Activated CD4-positive, alpha-beta memory T cell treated with anti-CD3 and anti-CD28 coated beads for 36 hours (primary cell): ENCODE measurements at regions of chr13 and their contacts with region 1.

Region 1: DNA sequence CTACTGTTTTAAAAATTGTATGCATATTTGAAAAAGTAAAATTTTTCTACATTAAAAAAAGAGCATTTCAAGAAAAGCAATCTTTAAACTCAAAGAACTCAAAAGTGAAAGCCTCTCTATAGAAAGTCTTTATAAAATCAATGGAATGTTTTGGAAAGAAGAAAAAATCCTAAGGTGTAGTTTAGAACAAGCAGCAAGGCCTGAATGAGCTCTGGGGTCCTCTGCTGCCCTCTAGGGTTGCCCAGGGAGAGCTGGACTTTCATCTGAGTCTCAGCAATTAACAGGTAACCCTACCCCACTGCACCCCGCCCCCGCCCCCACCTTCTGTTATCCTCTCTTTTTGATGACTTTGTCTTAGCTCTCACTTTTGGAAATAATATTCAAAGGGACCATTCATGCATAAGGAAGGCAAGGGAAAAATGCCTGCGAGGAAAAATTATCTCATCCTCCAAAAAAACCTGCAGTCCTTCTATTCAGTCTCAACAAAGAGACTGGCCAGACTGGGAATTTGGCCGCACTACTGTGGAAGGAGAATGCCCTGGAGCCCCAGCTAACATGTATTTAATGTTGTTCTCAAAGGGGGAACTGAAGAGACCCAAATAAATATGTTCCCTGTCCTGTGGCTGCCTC is 24.1 kb downstream of the SLC25A30 start:
- DNase-seq: peak; percentile 47
- H3K4me3 Mint-ChIP-seq: no peak overlapping the region
- H3K27ac Mint-ChIP-seq: no peak overlapping the region
- H3K4me1 Mint-ChIP-seq: peaks cover 46% of the 10 kb centered on the region
- H3K27me3 Mint-ChIP-seq: no peaks in the 10 kb centered on the region

Region 2: DNA sequence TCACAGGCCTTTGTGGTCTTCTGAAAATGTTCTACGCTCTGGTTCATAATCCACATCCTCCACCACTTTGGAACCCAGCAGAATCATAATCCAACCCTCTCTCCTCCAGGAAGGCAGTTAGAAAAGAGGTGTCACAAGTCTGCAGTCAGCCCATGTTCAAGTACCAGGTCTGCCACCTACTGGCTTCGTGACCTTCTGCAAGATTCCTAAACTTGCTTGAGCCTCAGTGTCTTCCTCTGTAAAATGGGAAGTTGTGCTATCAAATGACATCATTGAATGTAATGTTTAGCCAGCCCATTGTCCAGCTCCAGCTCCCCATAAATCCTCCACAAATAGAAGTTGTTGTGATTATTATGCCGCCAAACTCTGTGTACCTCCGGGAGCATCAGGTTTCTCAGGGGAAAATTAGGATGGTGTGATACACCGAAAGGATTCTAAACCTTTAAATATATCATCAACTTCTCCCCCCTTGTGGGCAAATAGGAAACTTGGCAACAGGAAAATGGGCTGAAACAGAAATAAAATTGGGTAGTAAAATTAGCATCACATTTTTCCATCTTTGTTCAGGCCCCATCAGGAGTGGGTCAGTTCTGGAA is 514.5 kb before region 1 on chr13:
- CTCF ChIA-PET with region 1: no interaction called
- POLR2A ChIA-PET with region 1: no interaction called
- intact Hi-C with region 1: no loop called
- DNase-seq: peak; percentile 37
- H3K4me3 Mint-ChIP-seq: no peak overlapping the region
- H3K27ac Mint-ChIP-seq: no peak overlapping the region
- H3K4me1 Mint-ChIP-seq: no peaks in the 10 kb centered on the region
- H3K27me3 Mint-ChIP-seq: peaks cover 3% of the 10 kb centered on the region

Region 3: DNA sequence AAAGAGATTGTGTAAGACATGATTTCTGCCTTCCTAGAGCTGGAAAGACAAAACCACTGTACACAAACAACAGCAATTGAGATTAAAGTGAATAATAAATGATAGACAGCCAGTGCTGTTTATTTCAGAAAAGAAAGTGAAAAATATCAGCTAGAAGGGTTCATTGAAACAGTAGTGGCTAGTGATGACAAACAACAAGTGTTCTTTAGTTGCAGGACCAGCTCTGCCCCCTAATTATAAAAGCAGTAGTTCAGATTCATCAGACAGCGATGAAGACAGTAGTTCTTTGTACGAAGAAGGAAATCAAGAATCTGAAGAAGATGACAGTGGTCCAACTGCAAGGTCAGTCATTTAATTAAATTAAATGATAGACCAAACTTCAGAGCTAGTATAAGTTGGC is 390.0 kb before region 1 on chr13:
- CTCF ChIA-PET with region 1: no interaction called
- POLR2A ChIA-PET with region 1: no interaction called
- intact Hi-C with region 1: no loop called
- DNase-seq: no peak
- H3K4me3 Mint-ChIP-seq: no peak overlapping the region
- H3K27ac Mint-ChIP-seq: no peak overlapping the region
- H3K4me1 Mint-ChIP-seq: no peaks in the 10 kb centered on the region
- H3K27me3 Mint-ChIP-seq: no peaks in the 10 kb centered on the region

Region 4: DNA sequence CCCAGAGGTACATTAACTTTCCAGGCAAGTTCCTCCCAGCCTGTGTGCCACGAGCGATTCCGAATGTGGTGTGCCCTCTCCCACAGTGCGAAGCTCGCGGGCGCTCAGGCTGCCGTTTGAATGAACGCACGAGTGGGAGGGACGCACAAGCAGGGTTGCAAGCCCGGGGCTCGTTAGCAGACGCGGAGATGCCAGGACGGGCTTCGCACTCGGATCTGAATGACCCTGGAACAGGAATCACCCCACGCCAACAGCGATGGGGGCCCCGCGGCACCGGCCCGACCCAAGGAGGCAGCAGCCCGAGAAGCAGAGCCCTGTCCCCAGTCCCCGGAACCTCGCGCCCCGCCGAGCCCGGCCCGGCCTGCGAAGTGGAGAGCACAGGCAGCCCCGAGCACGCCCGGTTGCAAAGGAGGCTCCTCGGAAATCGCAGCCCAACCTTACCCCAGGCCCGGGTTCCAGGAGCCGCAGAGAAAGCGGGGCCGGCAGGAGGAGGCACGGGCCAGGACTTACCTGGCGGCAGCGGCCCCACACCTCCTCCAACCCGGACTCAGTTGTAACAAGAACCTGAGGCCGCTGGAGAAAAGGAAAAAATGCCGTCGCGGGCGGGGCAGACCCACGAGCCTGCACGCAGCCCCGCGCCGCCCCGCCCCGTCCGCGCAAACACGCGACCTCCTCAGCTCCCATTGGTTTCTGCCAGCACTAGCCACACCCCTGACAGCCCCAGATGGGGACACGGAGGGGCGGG is 23.9 kb after region 1 on chr13 and contains the start of gene SLC25A30:
- CTCF ChIA-PET with region 1: interaction called, 26 read pairs
- POLR2A ChIA-PET with region 1: interaction called, 8 read pairs
- intact Hi-C with region 1: loop called (anchors 1 kb)
- DNase-seq: peak; percentile 93
- H3K4me3 Mint-ChIP-seq: peak within 1 kb of the TSS; percentile 84
- H3K27ac Mint-ChIP-seq: peak within 1 kb of the TSS; percentile 88
- H3K4me1 Mint-ChIP-seq: peaks cover 16% of the 10 kb centered on the region
- H3K27me3 Mint-ChIP-seq: no peaks in the 10 kb centered on the region
- total RNA-seq, gene SLC25A30: 14.6 to 15.3 TPM